Naive thymus-derived CD4-positive, alpha-beta T cell (primary cell): ENCODE measurements at regions of chr11 and their contacts with region 1.

Region 1: GRCh38 chr11:31509429-31510345 is at the starts of genes ELP4 and IMMP1L:
- DNase-seq: peak; percentile 86 to 97 (median 95)
- ATAC-seq: peak; percentile 100
- H3K4me3 ChIP-seq: peak within 1 kb of the TSS; percentile 85
- H3K4me3 Mint-ChIP-seq: peak within 1 kb of the TSS; percentile 89 to 100 (median 99)
- H3K27ac ChIP-seq: peak within 1 kb of the TSS; percentile 79
- H3K27ac Mint-ChIP-seq: peak within 1 kb of the TSS; percentile 92 to 100 (median 98)
- H3K4me1 ChIP-seq: peaks cover 13 to 14% of the 10 kb centered on the region in 2 donors
- H3K4me1 Mint-ChIP-seq: peaks cover 21 to 70% (median 49%) of the 10 kb centered on the region in 7 donors
- H3K27me3 ChIP-seq: no peaks in the 10 kb centered on the region
- H3K27me3 Mint-ChIP-seq: peaks cover 0 to 2% (median 0%) of the 10 kb centered on the region in 5 donors
- total RNA-seq, gene ELP4: 16.8 to 23.2 (median 21.2) TPM
- total RNA-seq, gene IMMP1L: 9.4 to 20.0 (median 16.1) TPM

Region 2: DNA sequence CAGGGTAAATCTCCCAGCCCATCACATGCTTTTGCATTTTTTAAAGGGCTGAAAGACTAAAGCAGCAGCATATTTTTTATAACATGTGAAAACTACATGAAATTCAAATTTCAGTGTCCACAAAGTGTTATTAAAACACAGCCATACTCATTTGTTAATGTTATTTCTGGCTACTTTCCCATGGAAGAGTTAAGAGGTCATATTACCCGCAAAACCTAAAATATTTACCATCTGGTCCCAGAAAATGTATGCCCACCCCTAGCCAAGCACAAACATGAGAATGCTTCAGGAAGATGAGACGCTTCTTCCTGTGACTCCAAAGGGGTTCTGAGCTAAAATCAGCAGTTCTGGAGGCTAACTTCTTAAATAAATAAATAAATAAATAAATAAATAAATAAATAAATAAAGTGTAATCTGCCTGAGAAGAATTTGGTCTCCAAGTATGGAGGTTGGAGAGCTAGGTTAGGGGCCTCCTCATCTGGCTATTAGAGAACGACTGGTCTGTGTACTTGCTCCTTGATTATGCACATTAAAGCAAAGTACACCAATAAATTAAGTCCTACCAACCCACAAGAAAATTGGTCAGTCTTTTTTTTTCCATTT is 10.0 kb before region 1 on chr11:
- CTCF ChIA-PET with region 1: no interaction called
- POLR2A ChIA-PET with region 1: interaction called, 4 read pairs
- intact Hi-C with region 1: loop called in 1 of 2 experiments (anchors 1 kb)
- DNase-seq: no peak
- ATAC-seq: no peak
- H3K4me3 ChIP-seq: no peak overlapping the region
- H3K4me3 Mint-ChIP-seq: no peak overlapping the region
- H3K27ac ChIP-seq: no peak overlapping the region
- H3K27ac Mint-ChIP-seq: no peak overlapping the region
- H3K4me1 ChIP-seq: no peaks in the 10 kb centered on the region
- H3K4me1 Mint-ChIP-seq: peaks cover 5 to 71% (median 47%) of the 10 kb centered on the region in 7 donors
- H3K27me3 ChIP-seq: no peaks in the 10 kb centered on the region
- H3K27me3 Mint-ChIP-seq: no peaks in the 10 kb centered on the region

Region 3: GRCh38 chr11:31943056-31943780 is 433.5 kb after region 1 on chr11:
- CTCF ChIA-PET with region 1: no interaction called
- POLR2A ChIA-PET with region 1: no interaction called
- intact Hi-C with region 1: loop called in 1 of 2 experiments (anchors 5 kb)
- DNase-seq: no peak
- ATAC-seq: no peak
- H3K4me3 ChIP-seq: no peak overlapping the region
- H3K4me3 Mint-ChIP-seq: peak overlapping the region in 1 of 10 donors; percentile 9
- H3K27ac ChIP-seq: no peak overlapping the region
- H3K27ac Mint-ChIP-seq: peak overlapping the region in 1 of 9 donors; percentile 24
- H3K4me1 ChIP-seq: no peaks in the 10 kb centered on the region
- H3K4me1 Mint-ChIP-seq: peaks cover 0 to 26% (median 0%) of the 10 kb centered on the region in 7 donors
- H3K27me3 ChIP-seq: no peaks in the 10 kb centered on the region
- H3K27me3 Mint-ChIP-seq: peaks cover 12 to 30% (median 18%) of the 10 kb centered on the region in 5 donors

Region 4: DNA sequence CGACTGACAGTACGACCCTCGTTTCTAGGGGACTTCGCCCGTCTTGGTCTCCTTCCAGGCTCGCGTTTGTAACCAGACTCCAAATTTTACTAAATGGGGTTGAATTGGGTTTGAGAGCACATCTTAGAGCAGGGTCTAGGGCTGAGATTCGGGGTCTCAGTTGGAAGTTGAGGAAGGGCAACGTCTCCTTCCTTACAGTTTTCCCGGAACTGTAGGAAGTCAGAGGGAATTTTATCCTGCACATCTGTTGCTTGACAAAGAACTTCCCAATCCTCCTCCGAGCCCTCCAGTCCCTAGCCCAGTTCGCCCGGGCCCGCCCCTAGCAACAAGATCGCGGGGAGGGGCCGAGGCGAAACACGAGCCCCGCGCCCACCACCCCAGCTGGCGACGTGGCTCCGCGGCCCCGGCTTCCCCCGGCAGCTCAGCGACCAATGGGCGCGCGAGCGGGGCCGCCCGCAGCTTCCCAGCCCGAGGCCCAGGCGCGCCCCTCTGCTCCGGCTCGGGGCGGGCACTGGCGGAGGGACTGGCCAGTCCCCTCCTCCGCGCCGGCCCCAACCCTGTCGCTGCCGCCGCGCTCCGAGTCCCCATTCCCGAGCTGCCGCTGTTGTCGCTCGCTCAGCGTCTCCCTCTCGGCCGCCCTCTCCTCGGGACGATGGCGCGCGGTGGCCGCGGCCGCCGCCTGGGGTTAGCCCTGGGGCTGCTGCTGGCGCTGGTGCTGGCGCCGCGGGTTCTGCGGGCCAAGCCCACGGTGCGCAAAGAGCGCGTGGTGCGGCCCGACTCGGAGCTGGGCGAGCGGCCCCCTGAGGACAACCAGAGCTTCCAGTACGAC is 581.1 kb after region 1 on chr11 and contains the start of gene RCN1:
- CTCF ChIA-PET with region 1: no interaction called
- POLR2A ChIA-PET with region 1: no interaction called
- intact Hi-C with region 1: loop called (anchors 2 to 5 kb)
- DNase-seq: peak in 3 of 9 donors; percentile 14 to 64 (median 54)
- ATAC-seq: peak; percentile 66
- H3K4me3 ChIP-seq: peak within 1 kb of the TSS; percentile 83
- H3K4me3 Mint-ChIP-seq: peak within 1 kb of the TSS; percentile 74 to 89 (median 84)
- H3K27ac ChIP-seq: peak within 1 kb of the TSS; percentile 81
- H3K27ac Mint-ChIP-seq: peak within 1 kb of the TSS; percentile 74 to 90 (median 83)
- H3K4me1 ChIP-seq: peaks cover 4 to 8% of the 10 kb centered on the region in 2 donors
- H3K4me1 Mint-ChIP-seq: peaks cover 12 to 36% (median 24%) of the 10 kb centered on the region in 7 donors
- H3K27me3 ChIP-seq: peaks cover 0 to 4% of the 10 kb centered on the region in 2 donors
- H3K27me3 Mint-ChIP-seq: peaks cover 5 to 19% (median 16%) of the 10 kb centered on the region in 5 donors
- total RNA-seq, gene RCN1: 5.5 to 26.8 (median 9.6) TPM